Activated CD8-positive, alpha-beta T cell treated with anti-CD3 and anti-CD28 coated beads for 36 hours (primary cell): ENCODE measurements at regions of chr12 and their contacts with region 1.

Region 1: GRCh38 chr12:34107781-34108404 is 85.6 kb downstream of the ALG10 start:
- DNase-seq: no peak
- ATAC-seq: no peak
- H3K4me3 Mint-ChIP-seq: no peak overlapping the region
- H3K27ac Mint-ChIP-seq: no peak overlapping the region
- H3K4me1 Mint-ChIP-seq: no peaks in the 10 kb centered on the region
- H3K27me3 Mint-ChIP-seq: peaks cover 15% of the 10 kb centered on the region
- CTCF ChIP-seq: no peak

Region 2: GRCh38 chr12:34033628-34034282 is 74.1 kb before region 1 on chr12:
- CTCF ChIA-PET with region 1: no interaction called
- POLR2A ChIA-PET with region 1: no interaction called
- intact Hi-C with region 1: loop called (anchors 10 kb)
- DNase-seq: no peak
- ATAC-seq: no peak
- H3K4me3 Mint-ChIP-seq: no peak overlapping the region
- H3K27ac Mint-ChIP-seq: no peak overlapping the region
- H3K4me1 Mint-ChIP-seq: no peaks in the 10 kb centered on the region
- H3K27me3 Mint-ChIP-seq: no peaks in the 10 kb centered on the region
- CTCF ChIP-seq: peak; percentile 72

Region 3: DNA sequence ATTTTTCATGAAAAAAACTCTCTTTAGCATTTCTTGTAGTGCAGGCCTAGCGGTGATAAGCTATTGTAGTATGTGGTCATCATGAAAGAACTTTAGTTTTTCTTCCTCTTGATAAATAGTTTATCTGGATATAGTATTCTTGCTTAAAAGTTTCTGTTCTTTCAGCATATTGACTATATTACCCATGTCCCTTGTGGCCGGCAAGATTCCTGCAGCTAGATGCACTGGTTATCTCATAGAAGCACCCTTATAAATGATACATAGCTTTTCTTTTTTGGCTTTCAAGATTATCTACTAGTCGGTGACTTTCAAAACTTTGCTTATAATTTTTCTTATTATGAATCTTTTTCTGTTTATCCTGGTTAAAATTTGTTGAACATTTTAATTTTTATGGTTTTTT is 149.2 kb after region 1 on chr12:
- CTCF ChIA-PET with region 1: no interaction called
- POLR2A ChIA-PET with region 1: no interaction called
- intact Hi-C with region 1: no loop called
- DNase-seq: no peak
- ATAC-seq: no peak
- H3K4me3 Mint-ChIP-seq: no peak overlapping the region
- H3K27ac Mint-ChIP-seq: no peak overlapping the region
- H3K4me1 Mint-ChIP-seq: no peaks in the 10 kb centered on the region
- H3K27me3 Mint-ChIP-seq: no peaks in the 10 kb centered on the region
- CTCF ChIP-seq: no peak